AG04450 (cell line): ENCODE measurements at regions of chr10 and their contacts with region 1.

Region 1: DNA sequence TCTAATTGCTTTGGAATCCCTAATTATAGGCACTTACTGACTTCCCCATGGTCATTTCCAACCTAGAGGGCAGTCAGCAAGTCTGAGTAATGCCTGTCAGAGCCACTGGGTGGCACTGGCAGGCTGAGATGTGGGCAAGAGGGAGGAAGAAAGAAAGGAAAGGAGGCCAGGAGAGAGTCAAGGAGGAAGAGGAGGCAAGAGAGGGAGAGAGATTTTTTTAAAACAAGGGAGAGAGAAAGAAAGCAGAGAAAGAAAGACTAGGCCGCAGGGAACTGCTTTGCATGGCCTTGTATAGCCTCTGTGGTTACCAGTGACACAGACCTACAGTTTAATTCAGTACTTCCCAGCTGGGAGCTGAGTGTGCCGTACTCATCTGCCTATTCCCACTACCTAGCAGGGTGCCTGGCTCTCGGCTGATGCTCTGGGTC is 210.4 kb upstream of the ADO start:
- DNase-seq: no peak
- H3K4me3 ChIP-seq: no peak overlapping the region
- H3K27ac ChIP-seq: no peak overlapping the region
- H3K27me3 ChIP-seq: no peaks in the 10 kb centered on the region
- CTCF ChIP-seq: peak; percentile 98

Region 2: DNA sequence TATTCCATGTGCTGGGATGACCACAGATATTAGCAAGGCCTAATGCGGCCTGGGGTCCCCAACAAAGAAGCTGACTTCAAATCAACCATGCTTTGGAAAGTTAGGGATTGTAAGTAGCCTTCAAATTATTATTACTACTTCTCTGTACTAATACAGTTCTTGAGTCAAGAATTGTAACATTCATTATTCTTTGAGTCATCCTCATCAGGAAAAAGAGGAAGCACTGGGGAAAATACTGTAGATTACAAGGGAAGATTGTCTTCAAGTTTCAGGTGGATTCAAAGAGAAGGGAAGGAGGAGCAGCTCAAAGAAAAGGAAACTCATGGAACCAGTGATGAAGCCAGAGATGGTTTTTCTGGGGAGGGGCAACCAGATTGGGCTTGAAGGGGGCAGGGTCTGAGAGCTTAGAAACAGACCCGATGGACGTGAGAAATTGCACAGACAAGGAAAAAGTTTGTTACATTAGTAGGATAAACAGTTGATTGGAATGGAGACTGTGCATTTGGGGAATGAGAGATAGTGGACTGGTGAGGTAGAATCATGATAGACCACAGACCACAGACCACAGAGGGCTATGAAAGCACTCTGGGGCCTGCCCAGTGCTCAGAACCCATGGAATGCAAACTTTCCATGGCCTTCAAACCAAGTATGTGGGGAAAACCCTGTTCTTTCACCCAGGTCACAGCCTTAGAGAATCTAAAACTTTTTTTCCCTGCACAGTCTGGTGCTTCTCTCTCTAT is 10.1 kb before region 1 on chr10:
- CTCF ChIA-PET with region 1: interaction called, 13 read pairs
- POLR2A ChIA-PET with region 1: no interaction called
- DNase-seq: peak; percentile 90
- H3K4me3 ChIP-seq: no peak overlapping the region
- H3K27ac ChIP-seq: peak overlapping the region; percentile 77
- H3K27me3 ChIP-seq: no peaks in the 10 kb centered on the region
- CTCF ChIP-seq: no peak

Region 3: DNA sequence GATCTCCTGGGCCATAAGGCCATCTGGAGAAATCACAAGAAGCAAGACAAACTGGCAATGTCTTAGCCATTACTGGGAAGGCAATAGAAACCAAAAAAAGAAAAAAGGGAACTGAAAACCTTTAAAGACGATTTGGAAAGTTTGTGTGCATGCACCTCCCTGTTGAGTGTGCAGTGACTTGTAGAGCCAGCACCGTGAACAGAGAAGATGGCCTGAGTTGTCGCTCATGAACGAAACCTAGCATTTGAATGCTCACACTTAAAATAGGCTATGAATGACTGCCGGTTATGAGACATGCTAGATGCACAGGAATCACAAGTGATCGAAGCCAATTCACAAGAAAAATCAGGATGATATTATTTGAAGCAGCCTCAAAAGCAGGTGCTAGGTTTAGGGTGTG is 59.1 kb after region 1 on chr10:
- CTCF ChIA-PET with region 1: no interaction called
- POLR2A ChIA-PET with region 1: no interaction called
- DNase-seq: no peak
- H3K4me3 ChIP-seq: no peak overlapping the region
- H3K27ac ChIP-seq: no peak overlapping the region
- H3K27me3 ChIP-seq: no peaks in the 10 kb centered on the region
- CTCF ChIP-seq: no peak

Region 4: DNA sequence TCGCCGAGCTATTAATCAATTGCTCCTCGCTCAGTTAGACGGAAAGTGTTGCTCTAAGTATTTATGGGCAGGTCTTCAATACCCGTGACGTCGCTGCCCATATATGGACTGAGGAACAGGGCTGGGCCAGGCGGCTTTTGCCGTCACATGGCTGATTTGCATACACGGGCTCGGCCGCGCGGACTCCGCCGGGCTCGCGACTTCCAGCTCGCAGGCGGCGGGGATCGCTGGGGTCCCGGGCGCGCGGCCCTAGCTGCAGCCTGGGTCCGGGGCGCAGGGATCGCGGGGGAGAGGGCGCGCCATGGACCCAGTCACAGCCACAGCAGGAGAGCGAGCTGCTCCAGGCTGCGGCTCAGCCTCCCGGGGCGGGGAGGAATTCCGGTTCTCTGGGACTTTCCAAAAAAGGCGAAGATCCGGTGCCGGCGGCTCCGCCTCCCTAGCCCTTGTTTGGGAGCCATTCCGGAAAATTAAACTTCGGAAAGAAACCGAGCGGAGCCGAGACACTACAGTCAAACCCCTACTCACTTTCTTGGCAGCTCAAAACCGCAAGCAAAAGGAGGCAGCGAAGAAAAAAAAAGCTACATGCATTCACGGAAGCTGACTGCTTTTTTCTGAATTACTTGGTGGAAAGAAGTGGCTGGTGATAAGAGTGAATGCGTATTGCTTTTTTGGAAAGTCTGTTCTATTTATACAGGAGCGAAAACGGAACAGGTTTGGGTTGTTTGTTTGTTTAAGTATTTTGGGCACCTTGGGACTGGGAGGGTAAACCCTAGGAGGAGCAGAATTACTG is 222.4 kb after region 1 on chr10 and contains the start of gene EGR2:
- CTCF ChIA-PET with region 1: interaction called, 42 read pairs
- POLR2A ChIA-PET with region 1: no interaction called
- DNase-seq: peak; percentile 80
- H3K4me3 ChIP-seq: peak within 1 kb of the TSS; percentile 68
- H3K27ac ChIP-seq: peak within 1 kb of the TSS; percentile 39
- H3K27me3 ChIP-seq: peaks cover 48% of the 10 kb centered on the region
- CTCF ChIP-seq: no peak
- polyA plus RNA-seq, gene EGR2: 0.57 and 0.61 TPM in 2 replicates

Region 5: GRCh38 chr10:63083904-63084689 is 490.0 kb after region 1 on chr10:
- CTCF ChIA-PET with region 1: interaction called, 10 read pairs
- POLR2A ChIA-PET with region 1: no interaction called
- DNase-seq: peak; percentile 61
- H3K4me3 ChIP-seq: no peak overlapping the region
- H3K27ac ChIP-seq: no peak overlapping the region
- H3K27me3 ChIP-seq: peaks cover 2% of the 10 kb centered on the region
- CTCF ChIP-seq: peak; percentile 70